AG04450 (cell line): ENCODE measurements at regions of chr10 and their contacts with region 1.

Region 1: DNA sequence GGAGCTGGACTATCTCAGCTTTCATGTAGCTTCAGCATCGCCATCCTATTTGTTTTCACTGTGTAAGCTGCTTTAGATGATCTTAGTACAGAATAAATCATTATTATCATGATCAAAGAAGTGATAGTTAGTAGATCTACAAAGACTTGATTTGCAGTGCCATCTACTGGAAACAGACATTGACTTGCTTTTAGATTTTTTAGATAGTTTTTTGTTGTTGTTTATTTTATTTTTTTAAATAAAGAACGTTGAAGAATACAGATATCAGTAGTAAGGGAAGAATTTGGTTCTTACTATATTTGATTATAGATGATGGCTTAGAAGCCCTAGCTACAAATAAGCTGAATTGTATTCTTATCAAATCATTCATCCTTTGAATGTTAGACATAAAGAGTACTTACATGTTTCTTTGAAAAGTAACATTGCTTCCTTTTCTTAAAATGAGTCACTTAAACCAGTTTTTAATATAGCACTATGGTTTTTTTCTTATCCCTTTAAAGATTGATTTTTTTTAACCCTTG is 6.3 kb upstream of the SFMBT2 start:
- DNase-seq: peak; percentile 7
- H3K4me3 ChIP-seq: no peak overlapping the region
- H3K27ac ChIP-seq: no peak overlapping the region
- H3K27me3 ChIP-seq: peaks cover 17% of the 10 kb centered on the region
- CTCF ChIP-seq: peak; percentile 57

Region 2: DNA sequence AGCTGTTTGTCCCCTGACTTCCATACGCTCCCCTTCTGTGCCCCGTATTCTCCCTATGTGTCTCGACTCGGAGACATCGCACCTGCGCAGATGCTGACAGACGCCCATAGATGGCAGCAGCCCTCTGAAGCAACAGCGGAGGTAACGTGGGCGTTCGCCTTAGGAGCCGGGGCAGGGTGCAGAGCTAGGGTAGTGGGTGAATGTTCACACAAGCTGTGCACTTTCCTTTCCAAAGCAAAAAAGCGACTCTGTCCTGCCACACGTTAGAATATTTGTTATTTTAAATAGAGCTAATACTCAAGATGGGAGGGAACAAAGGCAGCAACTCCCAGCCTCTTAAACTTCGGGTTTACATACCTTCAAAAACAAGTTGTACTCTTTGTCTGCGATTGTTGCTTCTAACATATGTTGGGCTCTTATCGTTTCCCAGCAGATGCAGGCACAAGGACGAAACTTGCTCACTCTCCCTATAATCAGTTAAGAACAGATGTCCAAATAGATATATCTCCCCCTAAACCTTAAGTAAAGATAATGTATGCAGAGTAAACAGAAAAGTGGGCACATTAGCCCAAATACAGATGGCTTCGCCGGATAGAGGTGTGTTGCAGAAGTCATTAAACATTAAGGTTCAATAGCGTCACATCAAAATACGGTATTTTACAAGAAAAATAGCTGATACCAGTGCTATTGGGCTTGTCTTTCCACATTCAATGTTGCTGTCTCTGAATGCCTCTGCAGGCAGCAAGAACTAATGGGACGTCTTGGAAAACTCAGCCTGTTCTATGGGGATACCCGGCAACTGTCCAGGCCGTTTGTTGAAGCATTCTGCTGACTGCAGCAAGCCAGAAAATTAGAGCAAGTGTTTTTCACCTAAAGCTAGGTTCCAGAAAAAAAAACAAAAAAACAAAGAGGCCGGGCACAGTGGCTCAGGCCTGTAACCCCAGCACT is 496.8 kb before region 1 on chr10:
- CTCF ChIA-PET with region 1: interaction called, 11 read pairs
- POLR2A ChIA-PET with region 1: no interaction called
- DNase-seq: no peak
- H3K4me3 ChIP-seq: no peak overlapping the region
- H3K27ac ChIP-seq: no peak overlapping the region
- H3K27me3 ChIP-seq: no peaks in the 10 kb centered on the region
- CTCF ChIP-seq: peak; percentile 80

Region 3: GRCh38 chr10:7444551-7445121 is 27.5 kb after region 1 on chr10:
- CTCF ChIA-PET with region 1: no interaction called
- POLR2A ChIA-PET with region 1: no interaction called
- DNase-seq: no peak
- H3K4me3 ChIP-seq: no peak overlapping the region
- H3K27ac ChIP-seq: no peak overlapping the region
- H3K27me3 ChIP-seq: no peaks in the 10 kb centered on the region
- CTCF ChIP-seq: no peak

Region 4: DNA sequence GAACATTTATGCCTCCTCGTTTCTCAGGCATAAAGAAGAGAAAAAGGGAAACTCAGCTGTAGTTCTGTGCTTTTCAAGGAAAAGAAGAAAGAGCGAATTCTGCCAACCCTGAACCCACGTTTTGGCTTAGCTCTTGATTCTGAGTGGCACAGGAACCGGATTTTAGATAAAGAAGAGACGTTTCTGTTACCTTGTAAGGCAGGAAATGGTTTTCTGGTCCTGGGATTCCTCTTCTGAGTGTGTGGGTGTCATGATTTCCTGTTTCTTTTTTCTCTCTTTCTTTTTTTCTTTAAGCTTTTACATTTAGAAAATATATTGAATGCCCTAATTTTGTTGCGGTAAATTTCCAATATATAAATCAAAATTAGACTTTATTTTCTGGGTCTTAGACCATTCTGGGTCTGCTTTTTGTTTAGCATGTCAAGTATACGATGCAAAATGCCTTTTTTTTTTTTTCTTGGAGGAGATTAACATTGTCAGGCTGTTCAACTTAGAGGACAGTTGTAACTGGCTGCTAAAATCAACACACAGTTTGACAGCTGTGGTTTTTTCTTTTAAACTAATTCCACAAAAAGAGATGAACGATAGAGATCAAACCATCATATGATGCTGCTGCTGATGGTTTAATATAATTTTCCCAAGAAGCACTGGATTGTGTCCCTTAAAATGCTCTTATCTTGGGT is 828.1 kb after region 1 on chr10:
- CTCF ChIA-PET with region 1: no interaction called
- POLR2A ChIA-PET with region 1: no interaction called
- DNase-seq: no peak
- H3K4me3 ChIP-seq: no peak overlapping the region
- H3K27ac ChIP-seq: no peak overlapping the region
- H3K27me3 ChIP-seq: no peaks in the 10 kb centered on the region
- CTCF ChIP-seq: no peak